Gastrocnemius medialis (tissue), 4 donors: ENCODE measurements at regions of chr17 and their contacts with region 1.

Region 1: GRCh38 chr17:37614823-37615222 is 5.6 kb upstream of the SYNRG start:
- DNase-seq: no peak
- ATAC-seq: no peak
- H3K4me3 ChIP-seq: no peak overlapping the region
- H3K27ac ChIP-seq: no peak overlapping the region
- H3K4me1 ChIP-seq: peaks cover 0 to 2% of the 10 kb centered on the region in 2 donors
- H3K27me3 ChIP-seq: no peaks in the 10 kb centered on the region
- CTCF ChIP-seq: no peak
- POLR2A ChIP-seq: no peak

Region 2: DNA sequence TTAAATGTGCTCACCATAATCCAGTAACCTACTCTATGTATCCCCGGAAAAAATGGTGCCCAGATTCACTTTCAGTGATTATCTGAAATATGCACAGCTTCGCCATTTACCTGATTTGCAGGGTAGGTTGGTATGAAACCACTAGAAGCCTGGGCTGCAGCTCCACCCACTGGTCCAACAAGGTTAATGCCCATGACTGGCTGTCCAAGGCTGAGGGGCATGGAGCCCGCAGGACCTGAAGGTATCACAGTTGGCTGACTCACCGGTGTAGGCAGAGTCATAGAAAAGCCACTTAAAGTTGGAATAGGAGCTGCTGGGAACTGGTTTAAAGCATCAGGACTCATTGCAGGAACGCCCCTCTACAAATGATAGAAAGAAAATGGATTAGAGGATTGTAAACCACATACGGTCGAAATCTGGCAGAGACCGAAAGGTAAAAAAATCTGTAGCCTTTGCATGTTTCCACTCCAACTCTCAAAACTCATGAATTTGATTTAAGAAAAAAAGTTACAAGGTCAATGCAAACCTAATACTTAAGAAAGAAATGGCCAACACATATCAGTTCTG is 44.2 kb before region 1 on chr17:
- in situ Hi-C with region 1: loop called in 1 of 4 experiments (anchors 10 kb)
- intact Hi-C with region 1: no loop called
- DNase-seq: peak in 1 of 2 donors; percentile 19
- ATAC-seq: no peak
- H3K4me3 ChIP-seq: no peak overlapping the region
- H3K27ac ChIP-seq: no peak overlapping the region
- H3K4me1 ChIP-seq: no peaks in the 10 kb centered on the region
- H3K27me3 ChIP-seq: no peaks in the 10 kb centered on the region
- CTCF ChIP-seq: peak in 2 of 5 experiments; percentile 14 to 27
- POLR2A ChIP-seq: no peak